ENCODE measurements at regions of chr9 and their contacts with region 1.

Region 1: DNA sequence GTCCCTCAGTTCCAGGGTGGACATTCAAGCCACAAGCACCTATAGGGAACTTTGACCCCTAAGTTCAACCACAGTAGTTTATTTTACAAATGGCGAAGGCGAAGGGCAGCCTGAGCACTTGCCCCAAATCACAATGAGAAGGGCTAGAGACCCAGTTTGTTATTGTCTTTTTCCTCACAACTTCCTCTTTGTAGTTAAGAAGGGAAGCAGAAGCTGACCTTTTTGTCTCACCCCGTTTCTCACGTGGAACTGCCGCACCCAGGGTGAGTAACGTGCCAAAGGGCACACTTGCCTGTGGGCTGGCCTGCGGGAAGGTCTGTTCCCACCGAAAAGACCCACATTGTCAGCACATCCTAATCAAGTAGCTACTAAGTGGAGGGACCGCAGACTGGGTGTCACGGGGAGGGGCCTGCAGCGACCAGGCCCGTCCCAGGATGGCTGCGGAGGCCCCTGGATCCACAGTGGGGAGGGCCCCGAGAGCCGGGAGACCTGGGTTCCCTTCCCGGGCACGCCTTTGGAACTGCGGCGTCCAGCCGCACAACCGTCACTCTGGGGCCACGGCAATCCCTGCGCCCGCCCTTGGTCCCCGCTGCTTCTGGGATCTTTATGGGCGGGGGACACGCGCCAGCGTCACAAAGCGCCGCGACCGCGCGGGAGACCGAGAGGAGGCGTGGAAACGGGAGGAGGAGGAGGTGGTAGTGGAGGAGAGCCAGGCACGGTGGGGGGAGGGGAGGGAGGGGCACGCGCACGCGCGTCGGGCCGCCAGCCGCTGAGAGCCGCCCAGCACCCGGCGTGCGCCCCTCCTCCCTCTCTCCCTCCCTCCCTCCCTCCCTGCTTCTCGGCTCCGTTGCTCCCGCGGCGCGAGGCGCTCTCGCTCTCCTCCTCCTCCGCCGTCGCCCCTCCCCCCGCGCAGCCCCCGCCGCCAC is at the start of gene UBE2R2:
- DNase-seq: no peak
- H3K4me3 ChIP-seq: peak within 1 kb of the TSS; percentile 89
- CTCF ChIP-seq: no peak

Region 2: DNA sequence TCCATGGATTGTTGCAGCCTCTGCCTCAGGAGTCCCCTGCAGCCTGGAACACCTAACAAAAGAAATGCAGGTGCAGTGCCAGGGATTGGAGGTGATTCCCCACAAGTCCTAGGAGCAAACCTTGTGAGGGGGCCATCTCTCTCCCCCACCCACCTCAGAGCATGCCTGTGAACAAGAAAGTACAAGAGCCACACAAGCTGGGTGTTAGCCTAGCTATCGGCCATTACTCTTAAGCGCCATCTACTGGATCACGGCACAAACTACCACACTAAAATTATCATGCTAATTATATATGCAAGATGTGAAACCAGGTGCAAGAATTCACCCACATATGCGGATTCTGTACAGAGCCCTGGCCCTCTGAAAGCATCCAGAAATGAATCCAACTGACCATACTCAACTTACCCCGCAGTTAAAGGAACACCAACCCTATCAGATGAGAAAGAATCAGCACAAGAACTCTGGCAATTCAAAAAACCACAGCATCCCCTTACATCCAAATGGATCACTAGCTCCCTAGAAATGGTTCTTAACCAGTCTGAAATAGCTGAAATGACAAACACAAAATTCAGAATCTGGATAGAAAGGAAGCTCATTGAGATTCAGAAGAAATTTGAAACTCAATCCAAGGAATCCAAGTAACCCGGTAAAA is 37.8 kb before region 1 on chr9:
- CTCF ChIA-PET with region 1: interaction called, 26 read pairs
- POLR2A ChIA-PET with region 1: no interaction called
- DNase-seq: no peak
- H3K4me3 ChIP-seq: no peak overlapping the region
- CTCF ChIP-seq: peak; percentile 71

Region 3: GRCh38 chr9:33800886-33801285 is 15.7 kb before region 1 on chr9:
- CTCF ChIA-PET with region 1: interaction called, 47 read pairs
- POLR2A ChIA-PET with region 1: interaction called, 3 read pairs
- DNase-seq: no peak
- H3K4me3 ChIP-seq: no peak overlapping the region
- CTCF ChIP-seq: no peak

Region 4: GRCh38 chr9:33843312-33843961 is 26.8 kb after region 1 on chr9:
- CTCF ChIA-PET with region 1: interaction called, 10 read pairs
- POLR2A ChIA-PET with region 1: no interaction called
- DNase-seq: no peak
- H3K4me3 ChIP-seq: no peak overlapping the region
- CTCF ChIP-seq: no peak

Region 5: DNA sequence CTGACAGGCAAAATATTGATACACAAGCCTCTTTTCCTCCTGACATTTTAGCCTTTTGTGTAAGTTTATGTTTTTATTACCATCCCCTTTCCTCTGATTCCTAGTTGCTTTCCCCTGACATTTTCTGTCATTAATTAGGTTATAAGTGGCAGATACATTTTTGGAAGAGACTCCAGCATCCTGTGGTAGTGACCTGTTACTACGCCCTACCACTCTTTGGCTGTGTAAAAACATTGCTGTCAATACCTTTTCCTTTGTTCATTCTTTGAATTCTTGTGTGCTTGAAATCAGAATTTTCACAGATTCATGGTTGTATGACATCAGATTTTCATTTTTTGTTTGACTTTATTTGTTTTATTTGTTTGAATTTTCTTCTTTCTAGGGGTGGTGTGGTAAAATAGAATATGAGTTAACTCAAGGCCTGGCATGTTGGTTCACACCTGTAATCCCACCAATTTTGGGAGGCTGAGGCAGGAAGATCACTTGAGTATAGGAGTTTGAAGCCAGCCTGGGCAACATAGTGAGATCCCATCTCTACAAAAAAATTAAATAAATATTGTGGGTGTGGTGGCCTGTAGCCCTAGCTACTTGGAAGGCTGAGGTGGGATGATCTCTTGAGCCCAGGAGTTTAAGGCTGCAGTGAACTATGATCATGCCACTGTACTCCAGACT is 43.7 kb after region 1 on chr9:
- CTCF ChIA-PET with region 1: interaction called, 11 read pairs
- POLR2A ChIA-PET with region 1: no interaction called
- DNase-seq: no peak
- H3K4me3 ChIP-seq: no peak overlapping the region
- CTCF ChIP-seq: no peak

Region 6: GRCh38 chr9:34025062-34025461 is 208.5 kb after region 1 on chr9:
- CTCF ChIA-PET with region 1: interaction called, 29 read pairs
- POLR2A ChIA-PET with region 1: no interaction called
- DNase-seq: peak; percentile 14
- H3K4me3 ChIP-seq: no peak overlapping the region
- CTCF ChIP-seq: no peak